ENCODE measurements at regions of chr10 and their contacts with region 1.

Region 1: GRCh38 chr10:37976091-37976879 is at the start of gene ZNF25:
- DNase-seq: peak; percentile 97 to 99 (median 98)
- H3K4me3 ChIP-seq: peak within 1 kb of the TSS; percentile 86
- H3K27ac ChIP-seq: peak within 1 kb of the TSS; percentile 92 to 95
- H3K4me1 ChIP-seq: no peaks in the 10 kb centered on the region
- H3K27me3 ChIP-seq: no peaks in the 10 kb centered on the region
- CTCF ChIP-seq: peak; percentile 81 to 94 (median 84)
- EP300 ChIP-seq: no peak
- POLR2A ChIP-seq: peak; percentile 84
- total RNA-seq, gene ZNF25: 10.8 to 22.5 (median 18.3) TPM

Region 2: DNA sequence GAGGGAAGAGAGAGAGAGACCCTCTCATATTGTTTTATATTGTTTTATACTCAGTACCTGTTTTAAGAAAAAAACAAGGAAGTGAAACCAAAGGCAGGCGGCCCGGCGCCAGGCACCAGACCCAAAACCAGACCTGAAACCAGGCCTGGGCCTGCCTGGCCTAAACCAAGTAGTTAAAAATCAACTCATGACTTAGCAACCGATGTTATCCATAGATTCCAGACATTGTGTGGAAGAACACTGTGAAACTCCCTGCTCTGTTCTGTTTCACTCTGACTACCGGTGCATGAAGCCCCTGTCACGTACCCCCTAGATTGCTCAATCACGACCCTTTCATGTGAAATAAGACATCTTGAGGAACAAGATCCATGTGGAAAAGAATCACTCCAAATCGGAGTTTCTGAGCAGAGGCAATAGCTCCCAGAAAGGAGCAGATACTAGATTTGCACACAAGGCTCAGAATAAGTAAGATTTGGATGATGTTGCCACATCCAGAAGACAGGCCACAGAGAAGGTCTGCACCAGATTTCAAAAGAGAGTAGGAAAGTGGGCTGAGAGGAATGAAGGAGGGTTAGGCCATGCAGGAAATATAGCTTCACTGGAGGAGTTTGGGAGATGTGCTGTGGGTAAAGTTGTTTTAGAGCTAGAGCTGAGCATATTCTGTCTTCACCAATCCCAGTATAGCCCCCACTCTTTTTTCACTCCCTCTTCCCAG is 110.2 kb before region 1 on chr10:
- intact Hi-C with region 1: no loop called
- DNase-seq: no peak
- H3K4me3 ChIP-seq: no peak overlapping the region
- H3K27ac ChIP-seq: no peak overlapping the region
- H3K4me1 ChIP-seq: no peaks in the 10 kb centered on the region
- H3K27me3 ChIP-seq: no peaks in the 10 kb centered on the region
- CTCF ChIP-seq: no peak
- EP300 ChIP-seq: no peak
- POLR2A ChIP-seq: no peak

Region 3: GRCh38 chr10:37952056-37952755 is 24.1 kb before region 1 on chr10:
- intact Hi-C with region 1: no loop called
- DNase-seq: no peak
- H3K4me3 ChIP-seq: no peak overlapping the region
- H3K27ac ChIP-seq: no peak overlapping the region
- H3K4me1 ChIP-seq: no peaks in the 10 kb centered on the region
- H3K27me3 ChIP-seq: no peaks in the 10 kb centered on the region
- CTCF ChIP-seq: no peak
- EP300 ChIP-seq: no peak
- POLR2A ChIP-seq: no peak

Region 4: GRCh38 chr10:38047666-38048065 is 71.4 kb after region 1 on chr10:
- intact Hi-C with region 1: no loop called
- DNase-seq: no peak
- H3K4me3 ChIP-seq: no peak overlapping the region
- H3K27ac ChIP-seq: no peak overlapping the region
- H3K4me1 ChIP-seq: no peaks in the 10 kb centered on the region
- H3K27me3 ChIP-seq: no peaks in the 10 kb centered on the region
- CTCF ChIP-seq: no peak
- EP300 ChIP-seq: no peak
- POLR2A ChIP-seq: no peak

Region 5: DNA sequence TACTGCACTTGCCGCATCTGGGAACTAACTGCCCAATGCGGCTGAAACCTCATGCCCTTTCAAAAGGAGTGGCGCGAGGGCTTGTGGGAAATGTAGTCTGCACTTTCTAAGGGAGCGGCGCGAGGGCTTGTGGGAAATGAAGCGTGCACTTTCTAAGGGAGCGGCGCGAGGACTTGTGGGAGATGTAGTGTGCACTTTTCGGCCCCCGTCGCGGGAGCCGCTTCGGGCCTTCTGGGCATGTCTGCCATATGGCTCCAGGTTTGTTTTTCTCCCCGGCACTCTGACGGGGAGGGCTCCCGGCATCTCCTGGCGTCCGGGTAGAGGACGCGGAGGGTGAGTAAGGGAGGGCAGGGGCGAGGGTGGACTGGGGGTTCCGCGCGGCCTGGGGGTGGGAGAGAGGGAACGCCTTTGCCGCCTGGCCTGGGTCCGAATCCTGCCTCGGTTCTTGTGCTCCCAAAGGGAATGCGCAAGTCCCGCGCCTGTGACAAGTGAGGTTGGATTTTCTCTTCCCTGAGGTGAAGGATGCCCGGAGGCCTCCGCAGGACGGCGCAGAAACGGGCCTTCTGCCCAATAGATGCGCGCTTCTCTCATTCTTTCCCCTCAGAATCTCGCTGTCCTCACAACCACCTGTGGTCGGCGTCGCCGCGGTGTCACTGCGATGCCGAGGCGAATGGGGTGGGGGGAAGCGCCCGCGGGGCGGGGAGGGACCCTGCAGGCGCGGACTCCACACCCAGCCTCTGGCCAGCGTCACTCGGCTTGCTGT is 118.1 kb after region 1 on chr10 and contains the start of gene ZNF37A:
- intact Hi-C with region 1: loop called in 1 of 4 experiments (anchors 10 kb)
- DNase-seq: peak; percentile 89 to 94 (median 90)
- H3K4me3 ChIP-seq: peak within 1 kb of the TSS; percentile 95
- H3K27ac ChIP-seq: peak within 1 kb of the TSS; percentile 17 to 81
- H3K4me1 ChIP-seq: peaks cover 5% of the 10 kb centered on the region
- H3K27me3 ChIP-seq: no peaks in the 10 kb centered on the region
- CTCF ChIP-seq: no peak
- EP300 ChIP-seq: no peak
- POLR2A ChIP-seq: no peak
- total RNA-seq, gene ZNF37A: 17.9 to 26.8 (median 21.6) TPM